MCF 10A (cell line): ENCODE measurements at regions of chr5 and their contacts with region 1.

Region 1: DNA sequence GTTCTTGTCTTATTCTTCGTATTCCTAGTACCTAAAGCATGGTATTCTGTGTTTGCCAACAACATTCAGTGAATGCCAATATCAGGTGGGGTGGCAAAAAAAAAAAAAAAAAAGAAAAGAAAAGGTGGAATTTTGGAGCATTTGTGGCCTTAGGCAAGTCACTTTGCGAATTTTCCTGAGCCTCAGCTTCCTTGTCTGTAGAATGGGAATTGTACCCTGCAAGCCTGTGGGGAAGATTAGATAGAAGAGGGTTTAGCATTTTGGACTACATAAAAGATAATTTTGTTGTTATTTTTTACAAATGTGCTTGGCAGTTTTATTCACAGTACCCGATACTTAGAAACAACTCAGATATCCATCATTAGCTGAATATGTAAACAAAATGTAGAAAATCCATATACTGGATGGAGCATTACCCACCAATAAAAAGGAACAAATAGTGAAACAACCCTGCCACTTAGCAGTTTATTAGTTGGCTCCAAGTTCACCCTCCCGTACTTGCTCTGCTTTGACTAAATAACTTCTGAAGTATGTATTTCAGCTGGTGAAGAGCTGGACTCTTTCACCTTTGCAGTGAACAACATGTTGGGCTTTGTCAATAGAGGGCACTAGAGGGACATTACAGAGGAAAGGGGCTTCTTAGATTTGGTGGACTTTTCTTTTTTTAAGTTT is 13.6 kb downstream of the UBE2D2 start:
- DNase-seq: peak; percentile 70
- H3K4me3 Mint-ChIP-seq: no peak overlapping the region
- H3K27ac Mint-ChIP-seq: peak overlapping the region; percentile 71
- H3K4me1 Mint-ChIP-seq: peaks cover 42% of the 10 kb centered on the region
- H3K27me3 Mint-ChIP-seq: no peaks in the 10 kb centered on the region
- CTCF ChIP-seq: peak; percentile 75

Region 2: GRCh38 chr5:139593716-139594319 is 19.0 kb after region 1 on chr5:
- CTCF ChIA-PET with region 1: interaction called, 6 read pairs
- POLR2A ChIA-PET with region 1: interaction called, 26 read pairs
- intact Hi-C with region 1: no loop called
- DNase-seq: peak; percentile 75
- H3K4me3 Mint-ChIP-seq: no peak overlapping the region
- H3K27ac Mint-ChIP-seq: peak overlapping the region; percentile 43
- H3K4me1 Mint-ChIP-seq: peaks cover 12% of the 10 kb centered on the region
- H3K27me3 Mint-ChIP-seq: no peaks in the 10 kb centered on the region
- CTCF ChIP-seq: no peak